ENCODE measurements at regions of chr19 and their contacts with region 1.

Region 1: GRCh38 chr19:2950286-2951124 is 5.7 kb upstream of the ZNF77 start:
- ATAC-seq: peak; percentile 94 to 99 (median 98)
- H3K4me3 ChIP-seq: peak overlapping the region; percentile 70 to 95 (median 80)
- H3K27ac ChIP-seq: peak overlapping the region; percentile 88 to 92
- H3K4me1 ChIP-seq: peaks cover 6 to 7% of the 10 kb centered on the region in 2 donors

Region 2: GRCh38 chr19:3108775-3109174 is 158.3 kb after region 1 on chr19:
- in situ Hi-C with region 1: loop called in 1 of 9 experiments (anchors 25 kb)
- ATAC-seq: peak in 5 of 8 experiments; percentile 30 to 74 (median 67)
- H3K4me3 ChIP-seq: no peak overlapping the region
- H3K27ac ChIP-seq: no peak overlapping the region
- H3K4me1 ChIP-seq: no peaks in the 10 kb centered on the region

Region 3: GRCh38 chr19:3163230-3163886 is 212.9 kb after region 1 on chr19:
- in situ Hi-C with region 1: loop called in 7 of 9 experiments (anchors 10 to 25 kb)
- ATAC-seq: peak; percentile 84 to 99 (median 96)
- H3K4me3 ChIP-seq: no peak overlapping the region
- H3K27ac ChIP-seq: no peak overlapping the region
- H3K4me1 ChIP-seq: no peaks in the 10 kb centered on the region

Region 4: DNA sequence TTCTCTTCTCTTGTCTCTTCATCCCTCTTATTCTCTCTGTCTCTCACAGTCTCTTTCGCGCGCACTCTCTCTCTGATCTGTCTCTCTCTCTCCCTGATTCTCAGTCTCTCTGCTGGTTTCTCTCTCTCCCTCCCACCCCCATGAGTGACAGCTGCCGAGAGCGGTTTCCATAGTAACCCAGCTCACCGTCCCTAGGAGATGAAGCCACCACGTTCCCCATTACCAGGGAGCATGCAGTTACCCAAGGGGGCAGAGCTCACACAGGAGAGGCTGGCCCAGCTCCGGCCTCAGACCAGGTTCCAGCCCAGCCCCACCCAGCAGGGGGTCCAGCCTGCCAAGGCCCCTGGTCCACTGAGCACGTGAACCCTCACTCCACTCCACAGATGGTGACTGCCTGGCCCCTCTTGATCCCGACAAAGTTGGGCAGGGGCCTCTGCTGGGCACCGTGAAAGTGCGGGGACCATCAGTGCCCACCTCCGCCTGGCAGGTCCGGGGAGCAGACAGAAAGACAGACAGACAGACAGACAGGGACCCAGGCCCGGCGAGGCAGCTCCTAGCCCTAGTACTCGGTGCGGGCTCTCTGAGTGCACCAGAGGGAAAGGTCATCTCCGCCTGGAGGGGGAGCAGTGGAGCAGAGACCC is 324.6 kb after region 1 on chr19:
- in situ Hi-C with region 1: loop called in 1 of 9 experiments (anchors 25 kb)
- ATAC-seq: peak in 6 of 8 experiments; percentile 18 to 64 (median 26)
- H3K4me3 ChIP-seq: peak overlapping the region; percentile 19 to 36 (median 26)
- H3K27ac ChIP-seq: peak overlapping the region; percentile 30 to 85
- H3K4me1 ChIP-seq: peaks cover 21 to 32% of the 10 kb centered on the region in 2 donors